Activated CD8-positive, alpha-beta memory T cell treated with anti-CD3 and anti-CD28 coated beads, Interleukin-2, amount 10 ng/mL, durations not matched to agents 7 days and 5 days (primary cell): ENCODE measurements at regions of chr18 and their contacts with region 1.

Region 1: DNA sequence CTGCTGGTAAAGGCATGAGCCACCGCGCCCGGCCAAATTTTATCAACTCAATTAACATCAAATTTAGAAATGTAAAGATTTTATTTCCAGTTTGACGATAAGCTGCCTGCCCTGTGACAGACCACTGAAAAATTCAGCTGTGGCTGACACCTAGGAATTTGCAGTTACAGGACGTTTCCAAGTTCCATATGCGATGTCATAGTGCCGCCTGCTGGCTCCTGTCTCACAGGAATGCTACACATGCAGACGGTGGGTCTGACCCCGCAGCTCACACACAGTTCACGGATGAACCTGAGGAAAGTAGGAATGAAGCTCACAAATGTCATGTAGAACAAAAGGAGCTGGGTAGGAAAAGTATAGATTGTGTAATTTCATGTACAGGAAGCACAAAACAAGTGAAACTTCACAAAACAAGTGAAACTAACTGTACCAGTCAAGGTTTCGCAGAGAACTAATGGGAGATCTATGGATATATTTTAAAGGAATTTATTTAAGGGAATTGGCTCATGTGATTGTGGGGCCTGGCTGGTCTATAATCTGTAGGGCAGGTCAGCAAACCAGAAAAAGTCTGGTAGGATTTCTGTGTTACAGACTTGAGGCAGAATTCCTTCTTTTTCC is 13.2 kb upstream of the SEH1L start:
- DNase-seq: peak; percentile 85
- ATAC-seq: peak; percentile 91
- H3K4me3 Mint-ChIP-seq: peak overlapping the region; percentile 14
- H3K27ac Mint-ChIP-seq: no peak overlapping the region
- H3K4me1 Mint-ChIP-seq: peaks cover 6% of the 10 kb centered on the region
- H3K27me3 Mint-ChIP-seq: peaks cover 12% of the 10 kb centered on the region

Region 2: DNA sequence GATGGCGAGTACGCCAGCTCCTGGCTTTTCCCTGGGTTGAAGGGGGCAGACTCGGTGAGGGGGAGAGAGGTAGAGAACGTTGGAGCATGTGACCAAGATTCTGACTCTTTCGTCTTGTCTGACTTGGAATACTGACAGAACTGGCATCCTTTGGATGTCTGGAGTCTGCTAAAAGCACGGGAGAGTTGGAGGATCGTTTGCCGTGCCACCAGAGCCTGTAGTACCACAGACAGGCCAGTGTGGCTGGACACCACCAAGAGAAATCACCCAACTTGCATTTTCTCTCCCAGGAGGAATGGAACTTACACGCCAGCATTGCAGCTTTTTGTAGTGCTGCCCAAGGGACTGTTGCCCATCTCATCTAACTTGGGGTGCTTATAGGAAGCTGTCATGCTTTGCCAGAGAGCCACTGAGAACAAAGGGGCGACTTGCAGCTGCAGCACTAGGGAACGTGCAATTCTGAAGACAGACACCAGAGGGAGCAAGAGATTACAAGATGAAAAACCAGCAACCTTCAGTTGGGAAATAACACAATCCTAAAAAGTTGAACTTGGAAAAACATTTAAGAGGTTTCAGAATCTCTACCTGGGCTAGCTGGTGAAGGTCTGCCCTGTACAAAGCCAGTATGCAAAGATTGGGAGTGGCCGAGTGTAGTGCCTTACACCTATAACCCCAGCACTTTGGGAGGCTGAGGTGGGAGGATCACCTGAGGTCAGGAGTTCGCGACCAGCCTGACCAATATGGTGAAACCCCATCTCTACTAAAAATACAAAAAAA is 207.6 kb before region 1 on chr18:
- CTCF ChIA-PET with region 1: interaction called, 70 read pairs
- DNase-seq: peak; percentile 70
- ATAC-seq: peak; percentile 67
- H3K4me3 Mint-ChIP-seq: no peak overlapping the region
- H3K27ac Mint-ChIP-seq: no peak overlapping the region
- H3K4me1 Mint-ChIP-seq: peaks cover 1% of the 10 kb centered on the region
- H3K27me3 Mint-ChIP-seq: no peaks in the 10 kb centered on the region

Region 3: GRCh38 chr18:12744103-12744502 is 190.5 kb before region 1 on chr18:
- CTCF ChIA-PET with region 1: interaction called, 31 read pairs
- DNase-seq: no peak
- ATAC-seq: peak; percentile 73
- H3K4me3 Mint-ChIP-seq: no peak overlapping the region
- H3K27ac Mint-ChIP-seq: no peak overlapping the region
- H3K4me1 Mint-ChIP-seq: peaks cover 5% of the 10 kb centered on the region
- H3K27me3 Mint-ChIP-seq: peaks cover 2% of the 10 kb centered on the region

Region 4: DNA sequence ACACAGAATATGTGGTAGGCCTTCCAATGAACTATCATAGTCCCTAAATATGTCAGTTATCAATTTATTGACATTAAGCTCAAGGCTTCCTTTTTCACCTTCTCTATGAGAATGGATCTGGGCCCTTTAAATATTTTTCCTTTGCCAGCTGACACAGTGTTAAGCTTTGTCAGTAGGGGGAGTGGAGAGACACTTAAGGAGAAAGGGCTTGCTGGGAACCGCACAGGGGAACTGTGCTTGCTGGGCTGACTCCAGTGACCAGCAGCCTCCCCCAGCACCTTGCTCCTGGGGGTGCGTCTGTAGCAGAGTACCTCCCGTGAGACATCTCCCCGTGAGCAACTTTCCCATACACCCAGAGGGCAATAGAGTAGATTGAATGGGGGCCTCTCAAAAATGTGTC is 44.1 kb before region 1 on chr18:
- CTCF ChIA-PET with region 1: interaction called, 20 read pairs
- DNase-seq: no peak
- ATAC-seq: peak; percentile 32
- H3K4me3 Mint-ChIP-seq: no peak overlapping the region
- H3K27ac Mint-ChIP-seq: no peak overlapping the region
- H3K4me1 Mint-ChIP-seq: peaks cover 8% of the 10 kb centered on the region
- H3K27me3 Mint-ChIP-seq: peaks cover 10% of the 10 kb centered on the region

Region 5: GRCh38 chr18:12911025-12911928 is 23.3 kb before region 1 on chr18:
- CTCF ChIA-PET with region 1: interaction called, 10 read pairs
- DNase-seq: peak; percentile 61
- ATAC-seq: peak; percentile 98
- H3K4me3 Mint-ChIP-seq: peak overlapping the region; percentile 50
- H3K27ac Mint-ChIP-seq: no peak overlapping the region
- H3K4me1 Mint-ChIP-seq: peaks cover 5% of the 10 kb centered on the region
- H3K27me3 Mint-ChIP-seq: peaks cover 15% of the 10 kb centered on the region

Region 6: GRCh38 chr18:12944709-12945108 is 10.1 kb after region 1 on chr18:
- CTCF ChIA-PET with region 1: interaction called, 18 read pairs
- DNase-seq: peak; percentile 46
- ATAC-seq: no peak
- H3K4me3 Mint-ChIP-seq: no peak overlapping the region
- H3K27ac Mint-ChIP-seq: no peak overlapping the region
- H3K4me1 Mint-ChIP-seq: peaks cover 38% of the 10 kb centered on the region
- H3K27me3 Mint-ChIP-seq: peaks cover 2% of the 10 kb centered on the region

Region 7: DNA sequence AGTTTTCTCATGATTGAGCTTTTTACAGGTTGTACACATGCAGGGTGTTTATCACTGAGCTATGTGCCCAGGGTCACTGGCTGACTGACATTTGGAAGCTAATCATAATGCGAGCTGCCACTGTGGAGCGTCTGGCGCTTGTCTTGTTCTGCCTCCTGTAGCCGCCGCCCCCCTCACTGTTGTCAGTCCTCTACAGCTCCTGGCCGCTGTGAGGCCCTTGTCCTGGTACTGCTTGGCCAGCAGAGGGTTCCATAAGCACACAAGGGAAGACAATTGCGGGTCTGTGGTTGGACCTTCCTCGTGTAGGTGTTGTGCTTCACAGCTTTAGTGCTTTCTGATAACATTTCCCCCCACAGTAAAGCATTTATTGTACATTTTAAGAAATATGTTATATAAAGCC is 178.4 kb after region 1 on chr18:
- CTCF ChIA-PET with region 1: no interaction called
- DNase-seq: no peak
- ATAC-seq: no peak
- H3K4me3 Mint-ChIP-seq: no peak overlapping the region
- H3K27ac Mint-ChIP-seq: no peak overlapping the region
- H3K4me1 Mint-ChIP-seq: no peaks in the 10 kb centered on the region
- H3K27me3 Mint-ChIP-seq: no peaks in the 10 kb centered on the region